Activated naive CD4-positive, alpha-beta T cell treated with anti-CD3 and anti-CD28 coated beads, Interleukin-2, amount 10 ng/mL, durations not matched to agents 7 days and 5 days (primary cell): ENCODE measurements at regions of chr17 and their contacts with region 1.

Region 1: DNA sequence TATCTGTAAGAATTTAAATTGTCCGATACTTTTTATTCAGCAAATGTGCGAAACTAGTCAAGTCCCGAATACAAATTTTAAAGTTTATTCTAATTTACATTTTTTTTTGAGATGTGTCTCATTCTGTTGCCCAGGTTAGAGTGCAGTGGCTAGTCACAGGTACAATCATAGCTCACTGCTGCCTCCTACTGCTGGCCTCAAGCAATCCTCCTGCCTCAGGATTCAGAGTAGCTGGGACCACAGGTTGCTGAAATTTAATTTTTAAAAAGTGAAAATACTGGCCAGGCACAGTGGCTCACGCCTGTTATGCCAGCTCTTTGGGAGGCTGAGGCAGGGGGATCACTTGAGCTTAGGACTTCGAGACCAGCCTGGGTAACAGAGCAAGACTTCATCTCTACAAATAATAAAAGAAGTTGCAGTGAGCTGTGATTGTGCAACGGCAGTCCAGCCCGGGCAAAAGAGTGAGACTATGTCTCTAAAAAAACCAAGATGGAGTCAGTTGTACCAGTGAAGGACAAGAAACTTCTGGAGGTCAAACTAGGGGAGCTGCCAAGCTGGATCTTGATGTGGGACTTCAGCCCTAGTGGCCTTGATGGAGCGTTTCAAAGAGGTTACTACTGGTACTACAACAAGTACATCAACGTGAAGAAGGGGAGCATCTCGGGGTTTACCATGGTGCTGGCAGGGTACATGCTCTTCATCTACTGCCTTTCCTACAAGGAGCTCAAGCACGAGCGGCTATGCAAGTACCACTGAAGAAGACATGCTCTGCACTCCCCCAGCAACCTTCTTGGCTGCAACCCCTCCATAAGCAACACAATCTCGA is 5.6 kb downstream of the POLG2 start:
- DNase-seq: peak; percentile 81
- H3K4me3 Mint-ChIP-seq: no peak overlapping the region
- H3K27ac Mint-ChIP-seq: no peak overlapping the region
- H3K4me1 Mint-ChIP-seq: peaks cover 44% of the 10 kb centered on the region
- H3K27me3 Mint-ChIP-seq: no peaks in the 10 kb centered on the region

Region 2: DNA sequence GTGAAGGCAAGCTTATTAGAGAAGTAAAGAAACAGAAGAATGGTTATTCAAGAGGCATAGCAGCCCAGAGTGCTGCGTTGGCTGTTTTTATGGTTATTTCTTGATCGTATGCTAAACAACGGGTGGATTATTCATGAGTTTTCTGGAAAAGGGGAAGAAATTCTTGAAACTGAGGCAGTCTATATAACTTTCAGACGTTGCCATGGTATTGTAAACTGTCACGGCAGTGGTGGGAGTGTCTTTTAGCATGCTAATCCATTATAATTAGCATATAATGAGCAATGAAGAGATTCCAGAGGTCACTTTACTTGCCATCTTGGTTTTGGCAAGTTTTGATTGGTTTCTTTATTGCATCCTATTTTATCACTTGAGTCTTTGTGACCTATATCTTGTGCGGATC is 59.7 kb before region 1 on chr17:
- CTCF ChIA-PET with region 1: interaction called, 12 read pairs
- DNase-seq: no peak
- H3K4me3 Mint-ChIP-seq: no peak overlapping the region
- H3K27ac Mint-ChIP-seq: no peak overlapping the region
- H3K4me1 Mint-ChIP-seq: no peaks in the 10 kb centered on the region
- H3K27me3 Mint-ChIP-seq: peaks cover 24% of the 10 kb centered on the region

Region 3: GRCh38 chr17:64479650-64480049 is 11.6 kb before region 1 on chr17:
- CTCF ChIA-PET with region 1: interaction called, 10 read pairs
- DNase-seq: no peak
- H3K4me3 Mint-ChIP-seq: no peak overlapping the region
- H3K27ac Mint-ChIP-seq: no peak overlapping the region
- H3K4me1 Mint-ChIP-seq: peaks cover 8% of the 10 kb centered on the region
- H3K27me3 Mint-ChIP-seq: no peaks in the 10 kb centered on the region

Region 4: DNA sequence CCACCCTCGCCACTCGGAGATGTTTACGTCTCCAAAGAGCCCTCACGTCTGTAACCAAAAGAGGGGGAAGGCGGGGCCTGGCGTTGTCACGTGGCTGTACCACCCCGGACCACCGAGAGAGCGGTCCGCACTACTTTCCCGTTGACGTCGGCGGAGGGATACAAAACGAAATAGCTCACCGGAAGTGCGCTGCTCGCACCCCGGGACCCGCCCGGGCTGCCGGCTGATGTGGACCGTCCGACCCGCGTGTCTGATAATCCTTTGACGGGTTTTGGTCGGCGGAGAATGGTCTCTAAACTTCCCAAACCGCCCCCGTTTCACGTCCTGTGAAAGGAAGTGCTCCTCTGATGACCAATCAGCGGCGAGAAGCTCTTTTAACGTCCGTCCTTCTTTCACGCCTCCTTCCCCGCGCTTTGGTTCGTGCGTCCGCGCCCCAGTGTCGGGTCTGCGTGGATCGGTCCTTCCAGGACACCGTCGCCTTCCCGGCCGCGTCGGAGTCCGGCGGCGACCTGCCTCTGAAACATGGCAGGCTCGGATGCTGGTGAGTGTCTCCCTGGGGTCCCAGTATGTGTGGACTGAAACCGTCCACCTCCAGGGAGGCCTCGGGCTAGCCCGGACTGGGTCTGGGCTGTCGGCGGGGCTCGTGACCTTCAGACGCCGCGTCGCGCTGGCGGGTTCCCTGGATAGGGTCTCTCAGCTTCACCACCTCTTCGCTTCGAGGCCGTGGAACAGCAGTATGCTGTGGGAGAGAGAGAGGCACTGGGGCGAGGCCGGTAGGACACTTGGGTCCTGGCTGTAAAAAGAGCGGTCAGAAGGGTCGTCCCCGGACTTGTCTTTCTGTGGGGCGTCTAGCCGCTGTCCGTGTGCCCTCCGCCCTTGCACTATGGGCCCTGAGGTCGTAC is 15.6 kb after region 1 on chr17 and contains the start of gene CEP95:
- CTCF ChIA-PET with region 1: interaction called, 27 read pairs
- DNase-seq: peak; percentile 97
- H3K4me3 Mint-ChIP-seq: peak within 1 kb of the TSS; percentile 95
- H3K27ac Mint-ChIP-seq: peak within 1 kb of the TSS; percentile 100
- H3K4me1 Mint-ChIP-seq: peaks cover 63% of the 10 kb centered on the region
- H3K27me3 Mint-ChIP-seq: peaks cover 9% of the 10 kb centered on the region

Region 5: GRCh38 chr17:64572638-64573154 is 81.4 kb after region 1 on chr17:
- CTCF ChIA-PET with region 1: no interaction called
- DNase-seq: no peak
- H3K4me3 Mint-ChIP-seq: no peak overlapping the region
- H3K27ac Mint-ChIP-seq: peak overlapping the region; percentile 64
- H3K4me1 Mint-ChIP-seq: peaks cover 11% of the 10 kb centered on the region
- H3K27me3 Mint-ChIP-seq: no peaks in the 10 kb centered on the region

Region 6: DNA sequence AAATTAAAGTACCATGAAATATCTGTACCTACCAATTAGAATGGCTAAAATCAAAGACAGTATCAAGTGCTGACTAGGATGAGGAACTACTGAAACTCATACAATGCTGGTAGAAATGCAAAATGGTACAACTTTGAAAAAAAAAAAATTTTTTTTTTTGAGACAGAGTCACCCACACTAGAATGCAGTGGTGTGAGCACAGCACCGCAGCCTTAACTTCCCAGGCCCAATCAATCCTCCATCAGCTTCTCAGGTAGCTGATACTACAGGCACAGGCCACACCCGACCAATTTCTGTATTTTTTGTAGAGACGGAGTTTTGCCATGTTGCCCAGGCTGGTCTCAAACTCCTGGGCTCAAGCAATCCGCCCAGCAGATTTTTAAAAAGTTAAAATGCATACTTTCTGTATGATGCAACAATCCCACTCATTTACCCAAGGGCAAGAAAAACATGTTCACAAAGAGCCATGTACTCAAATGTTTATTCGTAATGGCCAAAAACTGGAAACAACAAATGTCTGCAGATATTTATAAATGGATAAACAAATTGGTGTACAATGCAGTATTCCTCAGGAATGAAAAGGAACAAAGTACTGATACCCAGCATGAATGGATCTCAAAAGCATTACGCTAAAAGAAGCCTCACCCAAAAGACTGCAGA is 162.2 kb after region 1 on chr17:
- CTCF ChIA-PET with region 1: interaction called, 10 read pairs
- DNase-seq: no peak
- H3K4me3 Mint-ChIP-seq: no peak overlapping the region
- H3K27ac Mint-ChIP-seq: no peak overlapping the region
- H3K4me1 Mint-ChIP-seq: peaks cover 9% of the 10 kb centered on the region
- H3K27me3 Mint-ChIP-seq: no peaks in the 10 kb centered on the region

Region 7: GRCh38 chr17:64694207-64694606 is 203.0 kb after region 1 on chr17:
- CTCF ChIA-PET with region 1: no interaction called
- DNase-seq: no peak
- H3K4me3 Mint-ChIP-seq: no peak overlapping the region
- H3K27ac Mint-ChIP-seq: no peak overlapping the region
- H3K4me1 Mint-ChIP-seq: no peaks in the 10 kb centered on the region
- H3K27me3 Mint-ChIP-seq: peaks cover 17% of the 10 kb centered on the region